Ascending aorta (tissue), 2 donors: ENCODE measurements at regions of chr10 and their contacts with region 1.

Region 1: GRCh38 chr10:15585303-15585715 is 134.4 kb downstream of the ITGA8 start:
- DNase-seq: peak in 1 of 2 donors; percentile 84
- H3K4me3 ChIP-seq: no peak overlapping the region
- H3K27ac ChIP-seq: peak overlapping the region in 1 of 2 donors; percentile 31
- H3K4me1 ChIP-seq: peaks cover 0 to 3% of the 10 kb centered on the region in 2 donors
- H3K27me3 ChIP-seq: no peaks in the 10 kb centered on the region
- CTCF ChIP-seq: peak; percentile 72 to 81 (median 80)

Region 2: DNA sequence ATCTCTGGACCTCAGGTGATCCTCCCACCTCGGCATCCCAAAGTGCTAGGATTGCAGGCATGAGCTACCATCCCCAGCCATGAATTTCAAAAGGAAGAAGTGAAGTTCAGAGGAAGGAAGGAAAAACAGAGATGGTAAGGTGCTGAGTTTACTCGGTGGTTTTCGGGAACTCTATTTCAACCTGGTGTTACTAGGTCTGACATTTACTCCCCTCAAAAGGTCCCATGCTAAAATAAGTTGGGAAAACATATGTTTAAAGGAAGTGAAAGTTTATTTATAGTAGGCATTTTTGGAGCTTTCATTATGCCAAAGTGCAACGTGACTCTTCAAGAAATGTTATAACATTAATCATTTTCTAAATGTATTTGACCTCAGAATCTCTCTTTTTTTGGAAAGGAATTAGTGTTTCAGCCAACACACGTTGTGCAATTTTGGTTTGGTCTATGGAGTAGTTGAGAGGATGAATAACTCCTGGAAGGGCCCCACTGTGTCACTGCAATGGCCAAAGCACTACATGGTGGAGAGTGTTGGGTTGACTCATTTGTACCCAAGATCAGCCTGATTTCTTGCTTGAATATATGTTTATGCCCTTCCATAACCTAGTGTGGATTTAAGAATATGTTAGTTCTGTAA is 99.5 kb before region 1 on chr10:
- intact Hi-C with region 1: no loop called
- DNase-seq: peak; percentile 58 to 92
- H3K4me3 ChIP-seq: no peak overlapping the region
- H3K27ac ChIP-seq: peak overlapping the region; percentile 85 to 91
- H3K4me1 ChIP-seq: peaks cover 15 to 58% of the 10 kb centered on the region in 2 donors
- H3K27me3 ChIP-seq: no peaks in the 10 kb centered on the region
- CTCF ChIP-seq: peak in 1 of 3 experiments; percentile 4

Region 3: DNA sequence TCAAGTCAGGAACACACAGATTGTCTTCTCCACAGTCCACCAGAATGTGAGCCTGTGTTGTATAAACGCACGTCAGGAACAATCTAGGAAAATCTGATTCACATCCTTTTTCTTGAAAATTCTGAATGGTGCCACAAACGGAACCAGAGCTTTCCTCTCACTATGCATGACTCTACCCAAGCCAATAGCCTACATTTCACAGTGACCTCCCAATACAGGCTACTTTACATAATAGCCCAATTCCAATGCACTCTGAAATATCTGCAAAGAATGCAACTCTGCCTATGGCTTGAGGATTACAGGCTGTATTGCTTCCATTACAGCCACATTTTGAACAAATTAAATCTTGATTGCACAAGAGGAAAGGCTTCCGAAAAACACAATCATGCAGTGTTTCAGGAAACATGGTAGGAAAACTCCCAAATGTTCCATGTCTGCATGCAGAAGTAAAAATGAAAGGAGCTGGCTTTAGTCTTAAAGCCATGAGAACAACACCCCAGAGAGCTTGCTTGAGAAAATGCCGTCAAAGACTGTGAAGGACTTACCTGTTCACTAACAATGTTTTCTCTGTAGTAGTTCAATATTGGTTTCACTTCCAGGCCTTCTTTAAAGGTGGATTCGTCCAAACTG is 20.5 kb after region 1 on chr10:
- intact Hi-C with region 1: no loop called
- DNase-seq: no peak
- H3K4me3 ChIP-seq: no peak overlapping the region
- H3K27ac ChIP-seq: peak overlapping the region; percentile 23 to 28
- H3K4me1 ChIP-seq: peaks cover 0 to 8% of the 10 kb centered on the region in 2 donors
- H3K27me3 ChIP-seq: no peaks in the 10 kb centered on the region
- CTCF ChIP-seq: no peak

Region 4: DNA sequence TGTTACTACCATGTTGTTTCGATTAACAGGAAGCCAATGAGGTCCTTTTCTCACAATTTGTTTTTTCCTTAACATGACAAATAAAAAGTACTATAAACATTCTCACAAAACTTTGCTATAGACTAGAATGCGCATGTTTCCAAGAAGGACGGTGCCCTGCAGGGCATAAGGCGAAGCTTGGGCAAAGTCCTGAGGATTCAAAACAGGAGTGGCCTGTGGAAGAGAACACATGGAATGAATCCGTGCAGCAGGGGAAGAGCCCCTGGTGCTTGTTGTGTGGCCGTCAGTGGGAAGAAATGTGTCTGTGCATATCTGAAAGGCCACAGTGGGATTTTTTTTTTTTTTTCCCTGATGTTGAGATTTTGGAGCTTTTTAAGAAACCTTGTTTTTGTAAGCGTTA is 66.8 kb after region 1 on chr10:
- intact Hi-C with region 1: loop called (anchors 5 kb)
- DNase-seq: no peak
- H3K4me3 ChIP-seq: no peak overlapping the region
- H3K27ac ChIP-seq: peak overlapping the region; percentile 50 to 52
- H3K4me1 ChIP-seq: peaks cover 0 to 7% of the 10 kb centered on the region in 2 donors
- H3K27me3 ChIP-seq: no peaks in the 10 kb centered on the region
- CTCF ChIP-seq: no peak

Region 5: DNA sequence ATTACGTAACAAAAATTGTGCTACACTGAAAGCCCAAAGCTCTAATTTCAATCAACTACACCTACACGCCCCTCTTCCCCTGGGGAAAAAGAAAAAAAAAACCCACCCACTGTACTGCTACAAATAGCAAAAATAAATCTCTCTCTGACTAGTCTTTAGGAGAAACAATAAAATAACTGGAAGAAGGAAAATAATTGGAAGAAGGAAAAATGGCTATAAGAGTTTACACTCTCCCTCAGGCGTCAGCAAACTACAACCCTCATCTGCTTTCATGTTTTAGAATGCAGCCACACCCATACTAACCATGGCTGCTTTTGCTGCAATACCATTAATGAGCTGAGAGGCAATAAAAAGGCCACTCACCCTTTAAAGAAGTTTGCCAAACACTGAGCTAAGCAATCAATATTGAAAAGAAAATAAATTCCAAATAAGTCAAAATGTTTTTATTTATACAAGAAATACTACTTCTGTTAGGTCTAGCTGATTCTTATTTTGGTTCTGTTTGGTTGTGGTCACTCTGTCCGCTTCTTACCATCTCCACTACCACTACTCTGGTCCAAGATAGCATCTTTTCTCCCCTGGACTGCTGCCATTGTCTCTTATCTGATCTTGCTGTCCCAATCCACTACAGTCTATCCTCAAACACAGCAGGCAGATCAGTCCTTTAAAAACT is 271.2 kb after region 1 on chr10:
- intact Hi-C with region 1: no loop called
- DNase-seq: no peak
- H3K4me3 ChIP-seq: no peak overlapping the region
- H3K27ac ChIP-seq: no peak overlapping the region
- H3K4me1 ChIP-seq: peaks cover 3 to 14% of the 10 kb centered on the region in 2 donors
- H3K27me3 ChIP-seq: no peaks in the 10 kb centered on the region
- CTCF ChIP-seq: no peak